Heart left ventricle (tissue), 16 donors: ENCODE measurements at regions of chr9 and their contacts with region 1.

Region 1: DNA sequence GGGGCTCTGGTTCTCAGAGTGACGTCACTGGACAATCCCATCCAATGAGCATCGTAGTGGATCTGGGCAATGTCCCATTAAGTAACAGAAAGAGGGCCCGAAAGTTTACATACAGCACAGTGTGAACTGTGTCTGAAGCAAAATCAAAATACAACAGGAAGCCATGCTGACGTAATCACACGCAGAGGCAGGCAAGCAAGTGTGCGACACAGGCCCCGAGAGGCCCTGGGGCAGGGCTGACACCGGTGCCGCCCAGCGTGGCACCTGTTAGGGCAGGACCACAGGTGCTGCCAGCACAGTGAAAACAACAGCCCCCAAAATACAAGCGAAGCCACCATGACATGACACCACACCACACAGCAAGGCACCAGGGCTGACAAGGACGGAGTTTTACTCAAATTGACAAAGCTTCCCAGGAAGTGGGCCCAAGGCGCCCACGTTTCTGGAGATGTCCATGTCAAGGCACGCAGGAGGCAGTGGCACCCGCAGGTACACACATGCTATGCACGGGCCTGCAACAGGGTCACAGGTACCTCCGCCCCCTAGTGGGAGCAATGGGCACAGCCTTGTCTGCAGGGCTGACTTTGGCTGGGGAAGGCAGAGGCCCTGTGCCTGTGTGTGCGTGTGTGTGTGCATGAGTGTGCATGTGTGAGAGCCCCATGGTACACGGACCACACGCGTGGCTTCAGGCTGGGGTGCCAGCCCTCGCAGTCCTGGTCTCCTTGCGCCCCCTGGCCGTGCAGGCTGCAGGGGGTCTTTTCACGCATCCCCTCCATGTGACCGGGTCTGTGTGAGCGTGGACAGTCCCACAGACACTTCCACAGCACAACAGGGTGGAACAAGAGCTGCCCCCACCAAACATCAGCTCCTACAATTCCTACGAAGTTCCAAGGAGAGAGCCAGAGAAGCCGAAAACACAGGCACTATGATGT is 19.6 kb downstream of the QSOX2 start:
- DNase-seq: peak in 3 of 5 donors; percentile 35 to 46 (median 46)
- ATAC-seq: peak in 3 of 4 donors; percentile 72 to 77 (median 76)
- H3K4me3 ChIP-seq: no peak overlapping the region
- H3K27ac ChIP-seq: peak overlapping the region in 1 of 12 donors; percentile 42
- H3K4me1 ChIP-seq: no peaks in the 10 kb centered on the region
- H3K27me3 ChIP-seq: no peaks in the 10 kb centered on the region
- CTCF ChIP-seq: peak; percentile 56 to 77 (median 72)
- POLR2A ChIP-seq: no peak

Region 2: DNA sequence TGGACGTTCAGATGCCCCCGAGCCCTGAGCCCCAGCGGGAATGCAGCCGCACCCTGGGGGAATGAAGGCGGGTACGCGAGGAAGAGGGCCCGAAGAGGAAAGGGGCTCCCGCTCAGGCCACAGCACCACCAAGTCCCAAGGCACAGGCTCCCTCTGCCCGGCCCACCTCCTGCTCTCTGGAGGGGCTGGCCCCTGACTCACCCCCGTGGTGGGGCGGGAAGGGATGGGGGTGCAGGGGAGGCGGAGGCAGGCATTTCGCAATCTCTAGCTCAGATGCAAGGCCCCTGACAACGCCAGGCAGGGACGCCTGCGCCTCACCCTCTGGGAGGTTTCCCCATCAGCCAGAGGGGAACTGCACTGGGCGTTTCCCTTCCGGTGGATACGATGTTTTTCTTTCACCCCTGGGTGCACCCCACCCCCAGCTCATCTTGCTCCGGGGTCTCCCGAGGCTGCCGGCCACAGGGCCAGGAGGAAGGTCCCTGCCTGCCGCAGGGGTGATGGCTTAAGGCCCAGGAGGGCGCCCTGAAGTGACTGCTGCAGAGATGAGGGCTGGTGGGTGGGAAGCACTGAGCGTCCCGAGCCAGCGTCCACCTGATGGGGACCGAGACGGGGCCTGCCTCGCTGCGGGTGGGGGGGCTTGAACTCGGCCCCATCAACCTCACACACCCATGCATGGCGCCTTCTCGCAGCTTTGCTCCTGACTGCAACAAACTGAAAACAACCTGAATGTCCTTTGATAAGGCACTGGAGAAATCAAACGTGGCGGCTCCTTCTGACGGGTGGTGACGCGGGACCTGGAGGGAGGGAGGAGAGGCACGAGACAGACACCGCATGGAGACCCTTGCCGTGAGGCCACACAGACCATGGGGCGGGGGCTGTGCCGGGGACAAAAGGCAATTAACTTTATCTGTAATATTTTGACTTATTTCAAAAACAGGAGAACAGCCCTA is 179.8 kb before region 1 on chr9:
- intact Hi-C with region 1: no loop called
- DNase-seq: peak in 2 of 5 donors; percentile 51 to 76
- ATAC-seq: peak in 2 of 4 donors; percentile 3 to 40
- H3K4me3 ChIP-seq: peak overlapping the region in 1 of 12 donors; percentile 25
- H3K27ac ChIP-seq: peak overlapping the region in 1 of 12 donors; percentile 57
- H3K4me1 ChIP-seq: peaks cover 0 to 72% (median 23%) of the 10 kb centered on the region in 12 donors
- H3K27me3 ChIP-seq: no peaks in the 10 kb centered on the region
- CTCF ChIP-seq: no peak
- POLR2A ChIP-seq: no peak

Region 3: DNA sequence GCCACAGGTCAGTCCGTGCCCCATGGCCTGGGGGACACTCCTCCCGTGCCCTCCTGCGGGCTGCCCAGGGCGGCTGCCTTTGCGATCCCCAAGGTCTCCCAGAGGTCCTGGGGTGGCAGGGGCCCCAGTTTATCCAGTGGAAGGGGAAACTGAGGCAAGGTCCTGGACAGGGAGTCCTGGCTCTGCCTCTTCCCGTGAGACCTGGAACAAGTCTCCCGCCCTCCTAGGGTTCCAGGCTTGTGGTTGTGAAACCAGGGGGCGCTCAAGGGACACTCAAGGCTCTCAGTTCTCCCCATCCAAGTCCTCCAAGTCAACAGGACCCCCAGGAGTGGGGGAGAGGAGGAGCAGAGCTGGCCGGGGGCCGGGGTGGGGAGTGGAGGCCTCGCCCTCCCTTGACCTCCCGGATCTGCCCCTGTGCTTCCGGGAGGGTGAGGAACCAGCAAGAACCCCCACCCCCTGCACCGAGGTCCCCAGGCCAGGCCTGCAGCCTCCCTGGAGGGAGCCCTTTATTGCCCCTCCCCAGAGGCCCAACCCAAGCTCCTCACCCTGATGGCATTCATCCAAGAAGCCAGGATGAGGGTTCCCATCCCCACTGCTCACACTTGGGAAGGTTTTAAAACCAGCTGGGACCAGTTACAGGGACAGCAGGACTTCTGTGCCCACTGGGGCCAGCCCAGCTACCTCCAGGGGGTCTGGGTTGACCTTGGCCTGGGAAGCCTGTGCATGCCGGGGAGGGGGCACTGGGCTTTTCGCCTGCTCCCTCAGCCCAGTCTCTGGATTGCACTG is 82.6 kb before region 1 on chr9:
- intact Hi-C with region 1: loop called in 1 of 10 experiments (anchors 5 kb)
- DNase-seq: peak in 2 of 5 donors; percentile 20 to 28
- ATAC-seq: no peak
- H3K4me3 ChIP-seq: no peak overlapping the region
- H3K27ac ChIP-seq: no peak overlapping the region
- H3K4me1 ChIP-seq: no peaks in the 10 kb centered on the region
- H3K27me3 ChIP-seq: peaks cover 0 to 60% (median 17%) of the 10 kb centered on the region in 9 donors
- CTCF ChIP-seq: peak in 8 of 12 donors; percentile 10 to 43 (median 28)
- POLR2A ChIP-seq: no peak

Region 4: DNA sequence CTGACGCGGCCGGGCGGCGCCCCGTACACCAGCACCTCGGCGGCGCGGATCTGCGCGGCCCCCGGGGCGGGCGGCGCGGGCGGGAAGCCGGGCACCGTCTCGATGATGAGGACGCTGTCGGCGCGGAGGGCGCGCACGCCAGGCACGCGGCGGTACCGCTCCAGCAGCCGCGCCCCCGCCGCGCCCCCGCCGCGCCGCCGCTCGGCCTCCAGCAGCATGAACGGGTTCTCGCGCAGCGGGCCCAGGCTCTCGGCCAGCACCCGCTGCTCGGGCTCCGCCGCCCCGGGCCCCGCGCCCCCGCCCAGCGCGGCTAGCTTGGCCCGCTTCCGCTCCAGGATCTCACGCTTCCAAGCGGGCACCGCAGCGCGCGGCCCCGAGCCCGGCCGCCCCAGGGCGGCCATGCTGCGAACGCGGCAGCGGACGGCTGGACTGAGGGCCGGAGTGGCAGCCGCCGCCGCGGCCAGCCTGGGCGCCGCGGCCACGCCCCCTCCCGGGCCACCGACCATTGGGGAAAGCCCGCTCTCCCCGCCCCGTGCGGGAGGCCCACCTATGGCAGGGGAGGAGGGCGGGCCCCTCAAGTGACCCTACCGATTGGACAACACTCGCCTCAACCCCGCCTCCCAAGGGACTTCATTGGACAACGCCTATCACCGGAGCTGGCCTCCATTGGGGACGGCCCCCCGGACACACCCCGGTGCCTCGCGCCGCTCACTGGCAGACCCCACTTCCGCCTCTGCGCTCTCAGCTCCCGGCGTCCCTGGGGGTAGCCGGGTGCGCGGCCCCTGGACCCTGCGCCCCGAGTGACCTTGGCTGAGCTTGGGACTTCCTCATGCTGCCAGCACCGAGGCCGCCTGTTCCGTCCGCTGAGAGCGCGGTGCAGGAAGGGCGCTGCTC is 974.5 kb after region 1 on chr9 and contains the start of gene TPRN:
- intact Hi-C with region 1: no loop called
- DNase-seq: peak; percentile 99 to 100 (median 100)
- ATAC-seq: peak; percentile 97 to 99 (median 98)
- H3K4me3 ChIP-seq: peak within 1 kb of the TSS; percentile 23 to 94 (median 68)
- H3K27ac ChIP-seq: peak within 1 kb of the TSS; percentile 48 to 99 (median 88)
- H3K4me1 ChIP-seq: peaks cover 10 to 88% (median 74%) of the 10 kb centered on the region in 12 donors
- H3K27me3 ChIP-seq: no peaks in the 10 kb centered on the region
- CTCF ChIP-seq: peak in 1 of 12 donors; percentile 7
- POLR2A ChIP-seq: peak; percentile 80 to 85
- total RNA-seq, gene TPRN: 11.5 to 18.0 (median 16.6) TPM